ENCODE measurements at regions of chr11 and their contacts with region 1.

Region 1: GRCh38 chr11:95358511-95359340 is 127.7 kb upstream of the SESN3 start:
- DNase-seq: no peak
- ATAC-seq: no peak
- H3K4me3 ChIP-seq: no peak overlapping the region
- H3K27ac ChIP-seq: no peak overlapping the region
- H3K4me1 ChIP-seq: no peaks in the 10 kb centered on the region
- H3K27me3 ChIP-seq: peaks cover 0 to 2% of the 10 kb centered on the region in 2 experiments; a peak in 2 of 4 replicates
- CTCF ChIP-seq: no peak
- EP300 ChIP-seq: no peak
- POLR2A ChIP-seq: no peak
- RAD21 ChIP-seq: no peak

Region 2: GRCh38 chr11:95375886-95376285 is 17.2 kb after region 1 on chr11:
- CTCF ChIA-PET with region 1: no interaction called
- POLR2A ChIA-PET with region 1: no interaction called
- RAD21 ChIA-PET with region 1: interaction called, 4 read pairs
- SMC1A ChIA-PET with region 1: interaction called, 18 read pairs
- in situ Hi-C with region 1: no loop called
- intact Hi-C with region 1: no loop called
- DNase-seq: no peak
- ATAC-seq: no peak
- H3K4me3 ChIP-seq: no peak overlapping the region
- H3K27ac ChIP-seq: no peak overlapping the region
- H3K4me1 ChIP-seq: no peaks in the 10 kb centered on the region
- H3K27me3 ChIP-seq: peaks cover 0 to 1% of the 10 kb centered on the region in 2 experiments; a peak in 1 of 4 replicates
- CTCF ChIP-seq: no peak
- EP300 ChIP-seq: no peak
- POLR2A ChIP-seq: no peak
- RAD21 ChIP-seq: no peak

Region 3: GRCh38 chr11:95750101-95750500 is 391.4 kb after region 1 on chr11:
- CTCF ChIA-PET with region 1: no interaction called
- POLR2A ChIA-PET with region 1: no interaction called
- RAD21 ChIA-PET with region 1: no interaction called
- SMC1A ChIA-PET with region 1: no interaction called
- in situ Hi-C with region 1: no loop called
- intact Hi-C with region 1: no loop called
- DNase-seq: no peak
- ATAC-seq: no peak
- H3K4me3 ChIP-seq: no peak overlapping the region
- H3K27ac ChIP-seq: no peak overlapping the region
- H3K4me1 ChIP-seq: no peaks in the 10 kb centered on the region
- H3K27me3 ChIP-seq: no peaks in the 10 kb centered on the region
- CTCF ChIP-seq: no peak
- EP300 ChIP-seq: no peak
- POLR2A ChIP-seq: no peak
- RAD21 ChIP-seq: no peak